ENCODE measurements at regions of chr22 and their contacts with region 1.

Region 1: DNA sequence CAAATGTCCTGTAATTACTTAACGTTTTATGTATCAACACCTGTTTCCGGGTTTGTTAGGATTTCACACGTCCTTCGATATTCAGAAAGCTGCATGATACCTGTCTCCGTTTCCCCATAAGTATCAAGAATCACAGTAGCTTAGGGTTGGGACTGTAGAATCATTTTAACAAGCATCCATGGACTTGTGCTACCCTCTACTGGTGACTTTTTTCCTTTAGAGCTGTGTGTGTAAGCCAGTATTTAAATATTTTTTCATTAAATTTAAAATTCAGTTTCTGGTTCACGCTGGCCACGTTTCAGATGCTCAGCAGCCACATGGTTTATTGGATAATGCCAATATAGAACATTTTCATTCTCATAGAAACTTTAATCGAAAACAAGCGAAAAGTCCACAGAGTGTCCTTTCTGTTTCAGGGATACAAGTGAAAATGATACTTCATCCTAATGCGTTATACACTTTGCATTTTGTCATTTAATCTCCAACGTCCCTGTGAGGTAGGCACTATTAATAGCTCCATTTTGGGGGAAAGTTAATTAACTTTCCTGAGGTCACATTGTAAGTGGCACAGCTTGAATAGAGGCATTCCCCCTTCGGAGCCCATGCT is 61.5 kb upstream of the SLC25A18 start:
- DNase-seq: peak; percentile 79
- H3K4me3 ChIP-seq: no peak overlapping the region
- H3K27ac ChIP-seq: no peak overlapping the region
- H3K4me1 ChIP-seq: no peaks in the 10 kb centered on the region
- H3K27me3 ChIP-seq: peaks cover 0 to 2% of the 10 kb centered on the region in 2 experiments
- CTCF ChIP-seq: peak; percentile 43 to 46
- POLR2A ChIP-seq: no peak

Region 2: DNA sequence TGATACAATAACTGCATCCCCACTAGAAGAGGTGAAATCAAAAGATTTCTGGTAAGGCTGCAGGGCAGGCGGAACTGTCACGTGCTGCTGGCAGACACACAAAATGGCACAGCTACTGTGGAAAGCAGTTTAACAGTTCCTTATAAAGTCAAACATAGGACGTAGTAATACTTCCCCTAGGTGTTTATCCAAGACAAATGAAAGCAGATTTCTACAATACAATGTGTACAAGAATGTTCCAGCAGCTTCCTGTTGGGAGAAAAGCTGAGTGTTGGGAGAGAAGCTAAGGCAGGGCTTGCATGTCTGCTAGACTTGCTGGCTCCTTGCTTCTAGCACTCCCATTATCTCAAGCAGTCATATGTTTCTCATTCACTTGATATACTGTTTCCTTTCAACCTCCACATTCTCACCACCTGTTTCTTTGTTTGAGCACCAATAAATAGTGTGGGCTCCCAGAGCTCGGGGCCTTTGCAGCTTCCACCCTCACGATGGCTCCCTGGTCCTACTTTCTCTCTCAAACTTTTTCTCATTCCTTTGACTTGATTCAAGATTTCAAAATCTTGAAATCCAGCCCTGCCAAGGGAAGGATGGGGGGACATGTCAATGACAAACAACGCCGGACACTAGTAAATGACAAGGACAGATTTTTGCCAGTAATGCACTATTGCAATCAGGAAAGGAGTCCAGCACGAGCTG is 438.2 kb before region 1 on chr22:
- CTCF ChIA-PET with region 1: interaction called, 29 read pairs
- POLR2A ChIA-PET with region 1: no interaction called
- dilution Hi-C with region 1: no loop called
- intact Hi-C with region 1: no loop called
- DNase-seq: peak; percentile 95
- H3K4me3 ChIP-seq: peak overlapping the region in 1 of 3 experiments; percentile 19
- H3K27ac ChIP-seq: peak overlapping the region; percentile 92
- H3K4me1 ChIP-seq: peaks cover 33% of the 10 kb centered on the region
- H3K27me3 ChIP-seq: peaks cover 0 to 8% of the 10 kb centered on the region in 2 experiments
- CTCF ChIP-seq: no peak
- POLR2A ChIP-seq: peak; percentile 34

Region 3: DNA sequence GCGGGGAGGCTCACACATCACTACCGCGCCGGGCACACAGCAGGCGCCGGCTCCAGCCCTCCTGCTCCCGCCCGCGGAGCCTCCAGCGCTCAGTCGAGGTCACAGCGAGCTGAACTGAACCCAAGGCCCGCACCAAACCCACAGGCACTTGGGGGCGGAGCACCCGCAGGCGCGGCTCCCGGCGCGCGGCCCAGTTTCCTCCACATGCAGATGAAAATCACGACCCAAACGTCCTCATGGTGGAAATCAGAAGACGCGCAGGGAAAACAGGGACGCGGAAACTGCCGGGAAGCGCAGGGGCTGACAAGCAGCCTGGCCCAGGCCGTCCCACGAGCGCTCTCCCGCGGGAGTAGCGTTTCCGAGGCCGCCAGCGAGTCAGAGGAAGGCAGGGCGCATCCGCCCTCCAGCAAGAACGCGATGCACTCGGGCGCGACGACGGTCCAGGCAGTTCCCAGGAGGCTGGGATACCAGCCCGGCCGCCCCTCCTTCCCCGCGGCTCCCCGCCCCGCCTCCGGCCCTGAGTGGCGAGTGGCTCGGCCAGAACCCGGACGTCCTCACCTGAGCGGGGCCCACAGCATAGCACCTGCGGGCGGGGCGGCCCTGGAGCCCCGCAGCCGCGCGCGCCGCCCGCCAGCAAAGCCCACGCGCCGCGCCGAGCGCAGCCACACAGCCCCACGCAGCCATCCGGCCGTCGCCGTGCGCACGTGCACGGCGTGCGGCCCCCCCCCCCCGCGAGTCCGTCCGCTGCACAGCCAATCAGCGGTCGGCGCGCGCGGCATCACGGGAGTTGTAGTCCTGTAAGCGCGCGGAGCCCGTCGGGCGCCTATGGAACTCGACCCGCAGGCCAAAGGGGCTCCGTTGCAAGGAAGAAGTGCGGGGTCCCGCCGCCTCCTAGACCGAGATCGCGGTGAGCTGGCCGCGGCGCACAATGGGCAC is 342.9 kb before region 1 on chr22 and contains the start of gene HDHD5:
- CTCF ChIA-PET with region 1: interaction called, 21 read pairs
- POLR2A ChIA-PET with region 1: no interaction called
- dilution Hi-C with region 1: no loop called
- intact Hi-C with region 1: no loop called
- DNase-seq: peak; percentile 79
- H3K4me3 ChIP-seq: peak within 1 kb of the TSS; percentile 38 to 57 (median 57)
- H3K27ac ChIP-seq: peak within 1 kb of the TSS; percentile 41
- H3K4me1 ChIP-seq: peaks cover 15% of the 10 kb centered on the region
- H3K27me3 ChIP-seq: no peaks in the 10 kb centered on the region
- CTCF ChIP-seq: no peak
- POLR2A ChIP-seq: no peak
- total RNA-seq, gene HDHD5: 28.1 and 29.1 TPM in 2 replicates

Region 4: DNA sequence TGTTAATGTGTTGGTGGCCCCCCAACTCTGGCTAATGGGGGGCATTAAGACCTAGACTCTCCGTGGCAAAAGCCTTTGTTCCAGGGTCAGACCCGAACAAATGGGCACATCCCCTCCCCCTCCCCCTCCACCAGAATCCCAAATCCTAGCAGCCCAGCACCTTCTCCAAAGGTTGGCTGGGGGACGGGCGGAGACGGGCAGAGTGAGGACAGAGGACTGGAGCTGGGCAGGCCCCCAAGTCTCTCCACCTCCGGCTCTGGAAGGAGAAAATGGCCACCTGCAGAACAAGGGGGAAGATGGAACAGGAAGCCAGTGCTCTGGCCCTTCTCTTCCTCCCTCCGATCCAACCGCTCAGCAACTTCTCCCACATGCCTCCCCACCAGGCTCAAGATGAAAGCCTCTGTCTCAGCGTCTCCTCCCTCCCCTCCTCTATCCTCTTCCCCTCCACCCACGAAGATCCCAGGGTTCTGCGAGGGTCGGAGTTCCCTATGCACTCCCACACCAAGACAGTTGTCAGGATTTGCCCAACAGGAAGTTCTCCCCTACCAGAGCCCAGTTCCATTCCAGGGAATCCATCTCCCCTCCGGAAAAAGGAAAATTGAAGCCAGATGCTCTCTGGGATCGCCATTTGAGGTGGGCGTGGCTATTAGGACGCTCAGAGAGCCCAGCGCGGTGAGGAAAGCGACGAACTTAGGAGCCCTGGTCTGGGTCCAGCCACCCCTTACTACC is 302.6 kb before region 1 on chr22:
- CTCF ChIA-PET with region 1: interaction called, 19 read pairs
- POLR2A ChIA-PET with region 1: no interaction called
- dilution Hi-C with region 1: no loop called
- intact Hi-C with region 1: no loop called
- DNase-seq: no peak
- H3K4me3 ChIP-seq: peak overlapping the region; percentile 2 to 68 (median 48)
- H3K27ac ChIP-seq: peak overlapping the region; percentile 55
- H3K4me1 ChIP-seq: peaks cover 13% of the 10 kb centered on the region
- H3K27me3 ChIP-seq: peaks cover 2 to 3% of the 10 kb centered on the region in 2 experiments
- CTCF ChIP-seq: no peak
- POLR2A ChIP-seq: no peak

Region 5: DNA sequence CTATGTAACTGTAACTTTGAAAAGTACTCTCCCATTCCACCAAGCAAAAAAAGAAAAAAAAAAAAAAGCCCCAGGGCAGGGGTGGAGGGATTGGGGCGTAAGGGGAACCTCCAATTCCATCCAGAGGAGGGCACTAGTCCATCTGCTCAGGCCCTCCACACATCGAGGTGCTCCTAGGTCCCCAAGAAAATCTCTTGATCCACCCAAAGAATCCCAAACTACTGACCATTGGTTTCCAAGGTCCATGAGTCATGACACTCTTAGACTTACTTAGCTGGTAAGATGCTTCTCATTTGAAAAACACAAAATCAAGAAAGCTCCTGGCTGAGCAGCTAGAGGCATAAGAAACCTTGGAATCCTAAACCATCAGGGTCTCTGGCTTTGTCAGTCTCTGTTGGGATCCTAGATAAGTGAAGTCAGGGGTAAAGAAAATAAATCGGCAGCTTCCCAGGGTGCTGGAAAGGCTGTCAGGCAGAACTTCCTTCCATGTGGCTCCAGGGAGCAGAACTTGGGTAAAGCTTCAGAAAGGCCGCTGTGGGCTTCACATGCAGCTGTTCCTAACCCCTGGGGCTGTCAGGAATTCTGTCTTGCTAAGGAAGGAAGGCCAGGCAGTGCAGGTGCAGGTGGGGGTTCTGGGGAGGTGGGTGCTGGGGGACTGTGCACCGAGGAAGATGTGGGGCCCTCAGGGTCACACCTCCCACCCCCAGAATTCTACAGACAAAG is 233.1 kb before region 1 on chr22:
- CTCF ChIA-PET with region 1: interaction called, 14 read pairs
- POLR2A ChIA-PET with region 1: no interaction called
- dilution Hi-C with region 1: no loop called
- intact Hi-C with region 1: no loop called
- DNase-seq: no peak
- H3K4me3 ChIP-seq: no peak overlapping the region
- H3K27ac ChIP-seq: no peak overlapping the region
- H3K4me1 ChIP-seq: no peaks in the 10 kb centered on the region
- H3K27me3 ChIP-seq: no peaks in the 10 kb centered on the region
- CTCF ChIP-seq: no peak
- POLR2A ChIP-seq: no peak

Region 6: GRCh38 chr22:17460895-17461294 is 40.9 kb before region 1 on chr22:
- CTCF ChIA-PET with region 1: no interaction called
- POLR2A ChIA-PET with region 1: no interaction called
- dilution Hi-C with region 1: no loop called
- intact Hi-C with region 1: no loop called
- DNase-seq: no peak
- H3K4me3 ChIP-seq: no peak overlapping the region
- H3K27ac ChIP-seq: no peak overlapping the region
- H3K4me1 ChIP-seq: no peaks in the 10 kb centered on the region
- H3K27me3 ChIP-seq: no peaks in the 10 kb centered on the region
- CTCF ChIP-seq: no peak
- POLR2A ChIP-seq: no peak

Measured in endothelial cell of umbilical vein (primary cell).